Activated T-helper 1 cell treated with anti-CD3 and anti-CD28 coated beads, Interleukin-12 subunit alpha, Interleukin-12 subunit beta, Interleukin-2, Interleukin-4 antibody, amounts not matched to agents 30 ng/mL and 10 ng/mL and 1 ng/mL, durations not matched to agents 14 hours and 24 hours and 36 hours (primary cell): ENCODE measurements at regions of chr10 and their contacts with region 1.

Region 1: GRCh38 chr10:128150045-128150493 is 23.8 kb upstream of the MKI67 start:
- DNase-seq: peak; percentile 77
- H3K4me3 Mint-ChIP-seq: peak overlapping the region; percentile 76
- H3K27ac Mint-ChIP-seq: no peak overlapping the region
- H3K4me1 Mint-ChIP-seq: peaks cover 32% of the 10 kb centered on the region
- H3K27me3 Mint-ChIP-seq: peaks cover 27% of the 10 kb centered on the region

Region 2: GRCh38 chr10:128011175-128011979 is 138.7 kb before region 1 on chr10:
- intact Hi-C with region 1: loop called (anchors 1 kb)
- DNase-seq: peak; percentile 79
- H3K4me3 Mint-ChIP-seq: peak overlapping the region; percentile 42
- H3K27ac Mint-ChIP-seq: peak overlapping the region; percentile 29
- H3K4me1 Mint-ChIP-seq: peaks cover 10% of the 10 kb centered on the region
- H3K27me3 Mint-ChIP-seq: peaks cover 2% of the 10 kb centered on the region

Region 3: GRCh38 chr10:128047351-128047750 is 102.7 kb before region 1 on chr10:
- intact Hi-C with region 1: loop called (anchors 1 kb)
- DNase-seq: peak; percentile 83
- H3K4me3 Mint-ChIP-seq: peak overlapping the region; percentile 94
- H3K27ac Mint-ChIP-seq: peak overlapping the region; percentile 96
- H3K4me1 Mint-ChIP-seq: peaks cover 49% of the 10 kb centered on the region
- H3K27me3 Mint-ChIP-seq: peaks cover 2% of the 10 kb centered on the region

Region 4: DNA sequence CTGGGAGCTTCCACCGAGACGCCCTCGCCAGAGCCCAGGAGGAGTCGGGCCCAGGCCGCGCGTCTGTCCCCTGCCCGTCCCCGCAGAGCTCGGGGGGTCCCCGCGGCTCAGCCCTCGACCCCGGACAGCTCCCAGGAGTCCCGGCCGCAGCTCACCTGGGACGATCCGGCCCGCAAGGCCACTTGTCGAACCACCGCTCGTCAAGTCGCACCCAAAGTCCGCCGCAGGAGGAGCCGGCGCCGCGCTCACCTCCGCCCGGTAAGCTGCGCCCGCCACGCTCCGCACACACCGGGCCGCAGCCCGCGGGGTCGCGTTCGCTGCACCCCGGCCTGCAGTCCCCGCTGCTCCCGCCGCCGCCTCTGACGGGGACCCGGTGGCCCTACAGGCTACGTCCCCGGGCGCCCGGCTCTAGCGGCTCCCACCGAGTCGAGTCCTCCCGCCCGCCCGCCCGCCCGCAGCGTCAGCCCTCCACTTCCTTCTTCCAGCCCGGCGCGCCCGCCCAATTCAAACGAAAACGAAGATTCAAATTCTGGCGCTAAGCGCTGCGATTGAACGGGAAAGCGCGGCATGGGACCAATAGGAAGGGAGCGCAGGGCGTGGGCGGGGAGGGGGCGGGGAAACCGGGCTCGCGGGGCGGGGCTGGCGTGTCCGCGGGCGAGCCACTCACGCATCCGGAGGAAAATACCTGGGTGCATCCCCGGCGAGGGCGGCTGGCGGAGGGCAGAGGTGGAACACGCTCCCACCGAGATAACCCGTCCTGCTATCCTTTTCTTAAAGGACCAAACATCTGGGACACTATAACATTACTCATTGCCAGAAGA is 23.9 kb before region 1 on chr10 and contains the start of gene MKI67:
- intact Hi-C with region 1: loop called (anchors 1 kb)
- DNase-seq: peak; percentile 88
- H3K4me3 Mint-ChIP-seq: peak within 1 kb of the TSS; percentile 98
- H3K27ac Mint-ChIP-seq: peak within 1 kb of the TSS; percentile 95
- H3K4me1 Mint-ChIP-seq: peaks cover 54% of the 10 kb centered on the region
- H3K27me3 Mint-ChIP-seq: peaks cover 2% of the 10 kb centered on the region
- total RNA-seq, gene MKI67: 141 and 159 TPM in 2 replicates

Region 5: GRCh38 chr10:128211953-128212727 is 62.1 kb after region 1 on chr10:
- intact Hi-C with region 1: loop called (anchors 1 kb)
- DNase-seq: peak; percentile 83
- H3K4me3 Mint-ChIP-seq: peak overlapping the region; percentile 86
- H3K27ac Mint-ChIP-seq: peak overlapping the region; percentile 89
- H3K4me1 Mint-ChIP-seq: peaks cover 11% of the 10 kb centered on the region
- H3K27me3 Mint-ChIP-seq: peaks cover 13% of the 10 kb centered on the region